SK-N-SH (cell line): ENCODE measurements at regions of chr6 and their contacts with region 1.

Region 1: GRCh38 chr6:13574149-13574570 is 241 bp upstream of the SIRT5 start:
- DNase-seq: peak; percentile 99
- H3K4me3 ChIP-seq: peak overlapping the region; percentile 75 to 83
- H3K27ac ChIP-seq: peak overlapping the region; percentile 90 to 92
- H3K4me1 ChIP-seq: peaks cover 0 to 7% of the 10 kb centered on the region in 2 experiments; a peak in 2 of 4 replicates
- H3K27me3 ChIP-seq: no peaks in the 10 kb centered on the region
- CTCF ChIP-seq: peak; percentile 49
- EP300 ChIP-seq: no peak
- RAD21 ChIP-seq: peak; percentile 40

Region 2: GRCh38 chr6:13336553-13336952 is 237.6 kb before region 1 on chr6:
- CTCF ChIA-PET with region 1: interaction called, 30 read pairs
- POLR2A ChIA-PET with region 1: no interaction called
- DNase-seq: peak; percentile 80
- H3K4me3 ChIP-seq: no peak overlapping the region; a peak in 1 of 4 replicates
- H3K27ac ChIP-seq: no peak overlapping the region
- H3K4me1 ChIP-seq: peaks cover 0 to 4% of the 10 kb centered on the region in 2 experiments; a peak in 2 of 4 replicates
- H3K27me3 ChIP-seq: no peaks in the 10 kb centered on the region
- CTCF ChIP-seq: peak; percentile 91
- EP300 ChIP-seq: no peak
- RAD21 ChIP-seq: peak; percentile 99

Region 3: DNA sequence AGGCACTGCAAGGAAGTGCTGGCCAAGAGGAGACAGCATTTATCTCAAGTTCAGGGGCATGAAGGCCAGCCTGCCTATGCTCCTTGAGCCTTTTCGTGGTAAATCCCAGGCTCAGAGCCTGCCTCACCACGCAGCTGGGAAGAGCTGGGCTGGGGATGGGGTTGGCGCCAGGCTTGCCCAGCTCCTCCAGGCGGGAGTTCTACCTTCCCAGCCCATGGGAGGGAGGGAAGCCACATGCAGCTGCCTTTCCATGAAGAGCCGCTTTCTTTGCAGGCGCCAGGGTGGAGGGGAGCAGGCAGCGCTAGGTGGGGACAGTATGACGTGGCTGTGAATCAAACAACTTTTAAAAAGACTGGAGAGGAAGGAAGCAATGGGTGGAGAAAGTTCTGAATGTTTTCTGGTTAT is 19.2 kb before region 1 on chr6:
- CTCF ChIA-PET with region 1: interaction called, 48 read pairs
- POLR2A ChIA-PET with region 1: no interaction called
- DNase-seq: no peak
- H3K4me3 ChIP-seq: no peak overlapping the region
- H3K27ac ChIP-seq: no peak overlapping the region
- H3K4me1 ChIP-seq: peaks cover 0 to 15% of the 10 kb centered on the region in 2 experiments; a peak in 2 of 4 replicates
- H3K27me3 ChIP-seq: no peaks in the 10 kb centered on the region
- CTCF ChIP-seq: no peak
- EP300 ChIP-seq: no peak
- RAD21 ChIP-seq: no peak

Region 4: GRCh38 chr6:13593720-13594119 is 19.6 kb after region 1 on chr6:
- CTCF ChIA-PET with region 1: interaction called, 43 read pairs
- POLR2A ChIA-PET with region 1: interaction called, 3 read pairs
- DNase-seq: no peak
- H3K4me3 ChIP-seq: no peak overlapping the region
- H3K27ac ChIP-seq: peak overlapping the region in 1 of 2 experiments; percentile 62; a peak in 2 of 4 replicates
- H3K4me1 ChIP-seq: peaks cover 0 to 7% of the 10 kb centered on the region in 2 experiments; a peak in 1 of 4 replicates
- H3K27me3 ChIP-seq: no peaks in the 10 kb centered on the region
- CTCF ChIP-seq: no peak
- EP300 ChIP-seq: no peak
- RAD21 ChIP-seq: no peak

Region 5: GRCh38 chr6:13614926-13615798 is 41.0 kb after region 1 on chr6 and contains the start of gene NOL7:
- CTCF ChIA-PET with region 1: interaction called, 30 read pairs
- POLR2A ChIA-PET with region 1: interaction called, 33 read pairs
- DNase-seq: peak; percentile 99
- H3K4me3 ChIP-seq: peak within 1 kb of the TSS; percentile 96 to 99
- H3K27ac ChIP-seq: peak within 1 kb of the TSS; percentile 93 to 95
- H3K4me1 ChIP-seq: peaks cover 5 to 24% of the 10 kb centered on the region in 2 experiments; a peak in 3 of 4 replicates
- H3K27me3 ChIP-seq: no peaks in the 10 kb centered on the region
- CTCF ChIP-seq: peak; percentile 81
- EP300 ChIP-seq: no peak
- RAD21 ChIP-seq: no peak
- polyA plus RNA-seq, gene NOL7: 75.7 and 103 TPM in 2 replicates

Region 6: DNA sequence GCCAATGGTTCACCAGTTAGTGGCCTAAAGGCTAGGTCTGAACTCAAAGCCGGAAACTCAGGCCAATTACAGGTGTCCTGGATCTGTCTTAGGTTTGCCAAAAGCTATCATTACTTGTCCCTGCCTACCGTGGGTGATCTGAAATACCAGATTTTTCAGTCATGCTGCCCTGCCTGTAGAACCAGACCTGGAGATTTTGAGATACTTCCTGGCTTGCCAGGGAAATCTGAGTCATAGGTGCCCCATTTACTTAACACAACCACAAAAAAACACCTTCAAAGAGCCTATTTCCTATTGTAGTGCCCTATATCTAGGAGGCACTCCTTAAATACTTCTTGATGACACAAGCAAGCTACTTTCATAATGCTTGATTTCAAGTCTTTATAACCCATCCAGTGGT is 151.4 kb after region 1 on chr6:
- CTCF ChIA-PET with region 1: no interaction called
- POLR2A ChIA-PET with region 1: no interaction called
- DNase-seq: no peak
- H3K4me3 ChIP-seq: no peak overlapping the region
- H3K27ac ChIP-seq: no peak overlapping the region
- H3K4me1 ChIP-seq: peaks cover 0 to 14% of the 10 kb centered on the region in 2 experiments; a peak in 3 of 4 replicates
- H3K27me3 ChIP-seq: no peaks in the 10 kb centered on the region
- CTCF ChIP-seq: no peak
- EP300 ChIP-seq: no peak
- RAD21 ChIP-seq: no peak